ENCODE measurements at regions of chr6 and their contacts with region 1.

Region 1: GRCh38 chr6:63802606-63803206 is 167.1 kb downstream of the PHF3 start:
- DNase-seq: peak; percentile 12
- H3K4me3 ChIP-seq: no peak overlapping the region; a peak in 1 of 4 replicates
- H3K27ac ChIP-seq: peak overlapping the region in 1 of 2 experiments; percentile 92; a peak in 2 of 4 replicates
- H3K4me1 ChIP-seq: peaks cover 38 to 40% of the 10 kb centered on the region in 2 experiments
- H3K27me3 ChIP-seq: no peaks in the 10 kb centered on the region
- CTCF ChIP-seq: peak; percentile 81
- EP300 ChIP-seq: no peak
- RAD21 ChIP-seq: peak; percentile 86

Region 2: GRCh38 chr6:63307581-63308246 is 495.0 kb before region 1 on chr6:
- CTCF ChIA-PET with region 1: interaction called, 14 read pairs
- POLR2A ChIA-PET with region 1: no interaction called
- DNase-seq: peak; percentile 29
- H3K4me3 ChIP-seq: no peak overlapping the region; a peak in 1 of 4 replicates
- H3K27ac ChIP-seq: no peak overlapping the region
- H3K4me1 ChIP-seq: no peaks in the 10 kb centered on the region
- H3K27me3 ChIP-seq: no peaks in the 10 kb centered on the region
- CTCF ChIP-seq: peak; percentile 64
- EP300 ChIP-seq: no peak
- RAD21 ChIP-seq: peak; percentile 73

Region 3: DNA sequence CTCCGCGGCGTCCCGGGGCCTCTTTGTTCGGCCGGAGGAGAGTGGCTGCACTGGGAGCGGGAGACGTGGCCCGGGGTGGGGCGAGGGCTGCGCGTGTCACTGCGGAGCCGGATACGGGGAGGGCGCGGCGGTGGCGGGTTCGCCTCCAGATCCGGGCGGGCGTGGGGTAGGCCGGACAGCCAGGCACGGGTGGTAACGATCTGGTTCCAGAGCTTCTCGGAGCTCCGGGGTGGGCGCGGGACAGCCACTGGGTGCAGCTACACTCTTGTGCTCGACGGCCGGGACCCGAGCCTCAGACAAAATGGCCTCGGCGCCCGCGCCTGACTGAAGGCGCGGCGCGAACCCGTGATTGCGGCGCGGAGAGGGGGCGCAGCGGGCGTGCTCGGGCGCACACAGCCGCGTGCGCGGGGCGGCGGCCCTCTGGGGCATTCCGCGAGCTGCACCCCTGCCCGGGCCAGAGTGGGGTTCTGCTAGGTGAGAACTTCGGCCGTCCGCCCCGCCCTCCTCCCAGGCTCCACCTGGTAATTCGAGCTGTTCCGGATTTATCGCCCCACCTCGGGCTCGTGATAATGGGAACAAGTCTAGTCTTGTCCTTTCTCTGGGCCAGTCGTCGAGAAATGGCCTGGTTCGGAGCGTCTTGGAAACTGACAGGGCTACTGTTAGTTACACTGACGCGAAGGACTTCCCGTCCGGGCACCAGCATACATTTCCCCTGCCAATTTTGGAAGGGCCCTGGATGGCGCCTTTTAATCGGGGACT is 229.4 kb before region 1 on chr6:
- CTCF ChIA-PET with region 1: interaction called, 26 read pairs
- POLR2A ChIA-PET with region 1: interaction called, 3 read pairs
- DNase-seq: peak; percentile 70
- H3K4me3 ChIP-seq: peak overlapping the region; percentile 72 to 95
- H3K27ac ChIP-seq: peak overlapping the region; percentile 89 to 98
- H3K4me1 ChIP-seq: peaks cover 0 to 5% of the 10 kb centered on the region in 2 experiments; a peak in 3 of 4 replicates
- H3K27me3 ChIP-seq: no peaks in the 10 kb centered on the region
- CTCF ChIP-seq: no peak
- EP300 ChIP-seq: no peak
- RAD21 ChIP-seq: no peak

Region 4: DNA sequence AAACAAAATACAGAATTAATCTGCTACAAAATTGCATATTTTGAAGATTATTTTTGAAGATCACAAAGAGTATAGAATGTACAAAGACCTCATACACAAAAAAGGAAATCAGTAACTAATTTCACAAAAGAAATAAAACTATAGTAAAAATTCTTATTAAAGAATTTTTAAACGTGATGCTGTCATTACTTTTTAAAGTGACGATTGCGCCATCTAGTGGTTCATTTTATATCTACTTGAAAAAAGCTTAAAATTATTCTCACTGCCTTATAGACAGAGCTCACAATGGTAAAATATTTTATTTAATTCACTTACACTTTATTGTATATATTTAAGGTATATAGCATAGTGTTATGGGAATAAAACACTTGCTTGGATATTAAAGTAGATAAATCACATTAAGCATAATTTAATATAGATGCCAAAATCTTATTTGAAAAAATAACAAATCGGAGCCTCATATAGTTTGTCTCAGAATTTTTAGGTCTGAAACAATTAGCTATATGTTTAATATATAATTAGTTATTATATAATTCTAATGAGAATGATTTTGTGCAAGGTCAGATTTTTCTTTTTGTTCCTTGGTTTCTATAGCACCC is 38.3 kb before region 1 on chr6:
- CTCF ChIA-PET with region 1: interaction called, 38 read pairs
- POLR2A ChIA-PET with region 1: no interaction called
- DNase-seq: no peak
- H3K4me3 ChIP-seq: no peak overlapping the region
- H3K27ac ChIP-seq: no peak overlapping the region
- H3K4me1 ChIP-seq: no peaks in the 10 kb centered on the region
- H3K27me3 ChIP-seq: no peaks in the 10 kb centered on the region
- CTCF ChIP-seq: peak; percentile 69
- EP300 ChIP-seq: no peak
- RAD21 ChIP-seq: peak; percentile 68

Region 5: GRCh38 chr6:63816982-63817436 is 14.3 kb after region 1 on chr6:
- CTCF ChIA-PET with region 1: interaction called, 120 read pairs
- POLR2A ChIA-PET with region 1: interaction called, 5 read pairs
- DNase-seq: peak; percentile 68
- H3K4me3 ChIP-seq: no peak overlapping the region; a peak in 1 of 4 replicates
- H3K27ac ChIP-seq: peak overlapping the region in 1 of 2 experiments; percentile 94; a peak in 2 of 4 replicates
- H3K4me1 ChIP-seq: peaks cover 0 to 19% of the 10 kb centered on the region in 2 experiments; a peak in 2 of 4 replicates
- H3K27me3 ChIP-seq: no peaks in the 10 kb centered on the region
- CTCF ChIP-seq: peak; percentile 44
- EP300 ChIP-seq: peak in 1 of 2 experiments; percentile 93; a peak in 2 of 4 replicates
- RAD21 ChIP-seq: peak; percentile 73

Region 6: DNA sequence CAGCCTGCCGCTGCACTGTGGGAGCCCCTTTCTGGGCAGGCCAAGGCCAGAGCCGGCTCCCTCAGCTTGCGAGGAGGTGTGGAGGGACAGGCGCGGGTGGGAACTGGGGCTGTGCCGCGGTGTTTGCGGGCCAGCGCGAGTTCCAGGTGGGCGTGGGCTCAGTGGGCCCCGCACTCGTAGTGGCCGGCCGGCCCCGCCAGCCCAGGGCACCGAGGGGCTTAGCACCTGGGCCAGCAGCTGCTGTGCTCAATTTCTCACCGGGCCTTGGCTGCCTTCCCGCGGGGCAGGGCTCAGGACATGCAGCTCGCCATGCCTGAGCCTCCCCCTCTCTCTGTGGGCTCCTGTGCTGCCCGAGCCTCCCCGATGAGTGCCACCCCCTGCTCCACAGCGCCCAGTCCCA is 221.0 kb after region 1 on chr6:
- CTCF ChIA-PET with region 1: no interaction called
- POLR2A ChIA-PET with region 1: no interaction called
- DNase-seq: no peak
- H3K4me3 ChIP-seq: no peak overlapping the region
- H3K27ac ChIP-seq: no peak overlapping the region
- H3K4me1 ChIP-seq: no peaks in the 10 kb centered on the region
- H3K27me3 ChIP-seq: no peaks in the 10 kb centered on the region
- CTCF ChIP-seq: no peak
- EP300 ChIP-seq: no peak
- RAD21 ChIP-seq: no peak

Region 7: GRCh38 chr6:64090352-64090751 is 287.6 kb after region 1 on chr6:
- CTCF ChIA-PET with region 1: no interaction called
- POLR2A ChIA-PET with region 1: no interaction called
- DNase-seq: no peak
- H3K4me3 ChIP-seq: no peak overlapping the region
- H3K27ac ChIP-seq: no peak overlapping the region
- H3K4me1 ChIP-seq: no peaks in the 10 kb centered on the region
- H3K27me3 ChIP-seq: no peaks in the 10 kb centered on the region
- CTCF ChIP-seq: no peak
- EP300 ChIP-seq: no peak
- RAD21 ChIP-seq: no peak

Measured in SK-N-SH (cell line).